Activated CD4-positive, alpha-beta memory T cell treated with anti-CD3 and anti-CD28 coated beads for 36 hours (primary cell): ENCODE measurements at regions of chr20 and their contacts with region 1.

Region 1: GRCh38 chr20:2914160-2914559 is 40.9 kb downstream of the PTPRA start:
- DNase-seq: no peak
- H3K4me3 Mint-ChIP-seq: no peak overlapping the region
- H3K27ac Mint-ChIP-seq: no peak overlapping the region
- H3K4me1 Mint-ChIP-seq: peaks cover 20% of the 10 kb centered on the region
- H3K27me3 Mint-ChIP-seq: no peaks in the 10 kb centered on the region

Region 2: DNA sequence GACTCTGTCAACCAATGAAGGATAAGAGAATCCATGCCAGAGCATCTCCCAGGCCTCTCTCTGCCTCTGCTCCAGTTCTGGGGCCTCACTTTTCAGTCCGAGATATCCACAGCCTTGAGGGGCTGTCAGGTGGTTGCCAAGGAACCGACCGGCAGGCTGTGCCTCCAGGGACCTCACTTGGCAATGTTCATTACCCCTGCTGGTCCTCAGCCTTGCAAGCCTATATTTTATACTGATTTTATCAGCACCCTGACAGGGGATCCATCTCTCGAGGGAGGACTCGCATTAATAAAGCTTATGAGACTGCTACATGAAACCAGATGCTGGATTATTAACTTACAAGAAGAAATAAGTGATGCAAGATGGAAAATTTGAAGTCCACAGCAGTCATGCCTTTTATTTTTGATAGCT is 337.8 kb before region 1 on chr20:
- CTCF ChIA-PET with region 1: no interaction called
- POLR2A ChIA-PET with region 1: no interaction called
- intact Hi-C with region 1: no loop called
- DNase-seq: no peak
- H3K4me3 Mint-ChIP-seq: no peak overlapping the region
- H3K27ac Mint-ChIP-seq: no peak overlapping the region
- H3K4me1 Mint-ChIP-seq: no peaks in the 10 kb centered on the region
- H3K27me3 Mint-ChIP-seq: peaks cover 34% of the 10 kb centered on the region

Region 3: DNA sequence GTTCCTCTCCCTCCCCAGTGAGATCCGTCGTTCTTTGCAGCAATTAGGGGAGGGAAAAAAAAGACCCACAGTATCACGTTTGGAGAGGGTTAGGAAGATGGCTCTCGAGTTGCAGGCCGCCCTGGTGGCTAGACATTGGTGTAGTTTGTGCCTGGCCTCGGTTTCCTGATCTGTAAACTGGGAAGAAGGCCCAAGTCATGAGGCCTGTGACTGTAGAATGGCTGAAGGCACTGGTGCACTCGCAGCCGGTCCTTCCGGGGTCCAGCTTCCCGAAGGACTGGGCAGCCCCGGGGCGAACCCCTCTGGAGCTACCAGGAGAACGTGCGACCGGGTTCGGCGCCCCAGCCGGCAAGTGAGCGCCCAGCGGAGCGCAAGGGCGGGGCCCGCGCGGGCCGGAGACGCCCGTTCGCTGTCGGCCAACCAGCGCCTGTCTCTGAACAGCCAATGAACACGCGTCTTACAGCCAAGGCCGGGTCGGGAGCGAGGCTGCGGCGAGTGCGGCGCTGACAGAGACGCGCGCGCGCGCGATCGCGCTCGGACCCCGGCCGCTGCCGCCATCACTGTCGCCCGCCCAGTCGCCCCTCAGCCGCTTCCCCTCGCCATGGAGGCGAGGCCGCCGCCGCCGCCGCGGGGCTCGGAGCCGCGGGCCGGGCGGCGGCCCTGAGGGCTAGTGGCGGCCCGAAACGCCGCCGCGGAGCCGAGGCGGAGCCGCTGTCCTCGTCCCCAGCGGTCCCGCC is 41.0 kb before region 1 on chr20 and contains the start of gene PTPRA:
- CTCF ChIA-PET with region 1: no interaction called
- POLR2A ChIA-PET with region 1: no interaction called
- intact Hi-C with region 1: loop called (anchors 5 kb)
- DNase-seq: peak; percentile 95
- H3K4me3 Mint-ChIP-seq: peak within 1 kb of the TSS; percentile 90
- H3K27ac Mint-ChIP-seq: peak within 1 kb of the TSS; percentile 91
- H3K4me1 Mint-ChIP-seq: peaks cover 43% of the 10 kb centered on the region
- H3K27me3 Mint-ChIP-seq: no peaks in the 10 kb centered on the region
- total RNA-seq, gene PTPRA: 61.1 to 62.8 TPM

Region 4: DNA sequence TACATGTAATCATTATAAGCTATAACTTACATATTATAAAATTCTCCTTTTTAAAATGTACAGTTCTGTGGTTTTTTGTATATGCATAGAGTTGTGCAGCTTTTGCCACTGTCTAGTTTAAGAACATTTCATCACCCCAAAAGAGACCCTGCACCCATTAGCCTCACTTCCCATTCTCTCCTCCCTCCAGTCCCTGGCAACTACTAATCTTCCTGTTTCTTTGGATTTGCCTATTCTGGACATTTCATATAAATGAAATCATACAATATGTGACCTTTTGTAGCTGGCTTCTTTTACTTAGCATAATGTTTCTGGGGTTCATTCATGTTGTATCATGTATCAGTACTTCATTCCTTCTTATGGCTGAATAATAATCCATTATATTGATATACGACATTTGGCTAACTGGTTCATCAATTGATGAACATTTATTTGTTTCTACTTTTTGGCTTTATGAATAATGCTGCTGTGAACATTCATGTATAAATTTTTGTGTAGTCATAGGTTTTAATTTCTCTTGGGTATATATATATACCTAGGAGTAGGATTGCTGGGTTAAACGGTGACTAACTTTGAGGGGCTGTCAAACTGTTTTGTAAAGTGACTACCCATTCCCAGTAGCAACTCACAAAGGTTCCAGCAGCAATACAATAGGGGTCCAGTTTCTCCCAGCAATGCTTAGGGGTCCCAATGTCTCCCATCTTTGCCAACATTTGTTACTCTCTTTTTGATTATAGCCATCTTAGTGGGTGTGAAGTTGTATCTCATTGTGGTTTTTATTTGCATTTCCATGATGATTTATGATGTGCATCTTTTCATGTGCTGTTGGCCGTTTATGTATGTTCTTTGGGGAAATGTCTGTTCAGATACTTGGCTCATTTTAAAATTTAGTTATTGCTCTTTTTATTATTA is 30.2 kb before region 1 on chr20:
- CTCF ChIA-PET with region 1: no interaction called
- POLR2A ChIA-PET with region 1: interaction called, 4 read pairs
- intact Hi-C with region 1: loop called (anchors 1 kb)
- DNase-seq: no peak
- H3K4me3 Mint-ChIP-seq: no peak overlapping the region
- H3K27ac Mint-ChIP-seq: no peak overlapping the region
- H3K4me1 Mint-ChIP-seq: peaks cover 54% of the 10 kb centered on the region
- H3K27me3 Mint-ChIP-seq: no peaks in the 10 kb centered on the region

Region 5: GRCh38 chr20:3000852-3001523 is 86.8 kb after region 1 on chr20:
- CTCF ChIA-PET with region 1: interaction called, 10 read pairs
- POLR2A ChIA-PET with region 1: no interaction called
- intact Hi-C with region 1: loop called (anchors 1 kb)
- DNase-seq: no peak
- H3K4me3 Mint-ChIP-seq: no peak overlapping the region
- H3K27ac Mint-ChIP-seq: peak overlapping the region; percentile 51
- H3K4me1 Mint-ChIP-seq: peaks cover 9% of the 10 kb centered on the region
- H3K27me3 Mint-ChIP-seq: no peaks in the 10 kb centered on the region

Region 6: GRCh38 chr20:3051385-3052019 is 137.3 kb after region 1 on chr20:
- CTCF ChIA-PET with region 1: no interaction called
- POLR2A ChIA-PET with region 1: no interaction called
- intact Hi-C with region 1: no loop called
- DNase-seq: no peak
- H3K4me3 Mint-ChIP-seq: no peak overlapping the region
- H3K27ac Mint-ChIP-seq: peak overlapping the region; percentile 23
- H3K4me1 Mint-ChIP-seq: peaks cover 29% of the 10 kb centered on the region
- H3K27me3 Mint-ChIP-seq: no peaks in the 10 kb centered on the region

Region 7: GRCh38 chr20:3190681-3191111 is 276.5 kb after region 1 on chr20:
- CTCF ChIA-PET with region 1: no interaction called
- POLR2A ChIA-PET with region 1: no interaction called
- intact Hi-C with region 1: no loop called
- DNase-seq: no peak
- H3K4me3 Mint-ChIP-seq: no peak overlapping the region
- H3K27ac Mint-ChIP-seq: no peak overlapping the region
- H3K4me1 Mint-ChIP-seq: peaks cover 11% of the 10 kb centered on the region
- H3K27me3 Mint-ChIP-seq: no peaks in the 10 kb centered on the region